Naive thymus-derived CD4-positive, alpha-beta T cell (primary cell): ENCODE measurements at regions of chr1 and their contacts with region 1.

Region 1: DNA sequence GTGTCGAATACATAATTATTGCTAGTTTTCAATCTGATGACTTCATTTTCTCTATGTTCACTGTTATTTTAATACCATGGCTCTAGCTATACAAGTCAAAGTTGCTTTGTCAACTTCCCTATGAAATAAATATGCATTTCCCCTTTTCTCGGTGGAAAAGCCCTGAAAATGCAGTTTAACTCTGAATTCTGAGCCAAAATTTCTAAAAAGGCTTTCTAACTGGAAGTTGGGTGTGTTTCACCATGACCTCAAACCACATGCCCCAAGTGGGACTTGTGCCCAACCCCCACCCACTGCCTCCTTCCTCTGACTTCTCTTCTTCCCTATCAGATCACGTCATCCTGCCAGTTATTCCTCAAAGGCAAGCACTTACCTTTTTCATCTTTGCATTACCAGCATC is 8.9 kb downstream of the MKNK1 start:
- DNase-seq: no peak
- ATAC-seq: peak; percentile 74
- H3K4me3 ChIP-seq: no peak overlapping the region
- H3K4me3 Mint-ChIP-seq: peak overlapping the region in 5 of 10 donors; percentile 3 to 55 (median 20)
- H3K27ac ChIP-seq: no peak overlapping the region
- H3K27ac Mint-ChIP-seq: peak overlapping the region in 6 of 9 donors; percentile 2 to 75 (median 33)
- H3K4me1 ChIP-seq: peaks cover 13 to 30% of the 10 kb centered on the region in 2 donors
- H3K4me1 Mint-ChIP-seq: peaks cover 33 to 83% (median 52%) of the 10 kb centered on the region in 7 donors
- H3K27me3 ChIP-seq: no peaks in the 10 kb centered on the region
- H3K27me3 Mint-ChIP-seq: no peaks in the 10 kb centered on the region

Region 2: GRCh38 chr1:46493316-46494032 is 101.7 kb before region 1 on chr1:
- CTCF ChIA-PET with region 1: no interaction called
- POLR2A ChIA-PET with region 1: no interaction called
- intact Hi-C with region 1: no loop called
- DNase-seq: no peak
- ATAC-seq: no peak
- H3K4me3 ChIP-seq: no peak overlapping the region
- H3K4me3 Mint-ChIP-seq: no peak overlapping the region
- H3K27ac ChIP-seq: no peak overlapping the region
- H3K27ac Mint-ChIP-seq: no peak overlapping the region
- H3K4me1 ChIP-seq: no peaks in the 10 kb centered on the region
- H3K4me1 Mint-ChIP-seq: peaks cover 0 to 19% (median 16%) of the 10 kb centered on the region in 7 donors
- H3K27me3 ChIP-seq: peaks cover 0 to 7% of the 10 kb centered on the region in 2 donors
- H3K27me3 Mint-ChIP-seq: peaks cover 66 to 87% (median 76%) of the 10 kb centered on the region in 5 donors

Region 3: GRCh38 chr1:46581681-46582455 is 13.3 kb before region 1 on chr1:
- CTCF ChIA-PET with region 1: no interaction called
- POLR2A ChIA-PET with region 1: no interaction called
- intact Hi-C with region 1: loop called in 1 of 2 experiments (anchors 2 kb)
- DNase-seq: peak in 1 of 9 donors; percentile 43
- ATAC-seq: peak; percentile 77
- H3K4me3 ChIP-seq: no peak overlapping the region
- H3K4me3 Mint-ChIP-seq: peak overlapping the region in 1 of 10 donors; percentile 83
- H3K27ac ChIP-seq: no peak overlapping the region
- H3K27ac Mint-ChIP-seq: peak overlapping the region in 4 of 9 donors; percentile 13 to 98 (median 59)
- H3K4me1 ChIP-seq: peaks cover 6 to 23% of the 10 kb centered on the region in 2 donors
- H3K4me1 Mint-ChIP-seq: peaks cover 5 to 55% (median 19%) of the 10 kb centered on the region in 7 donors
- H3K27me3 ChIP-seq: no peaks in the 10 kb centered on the region
- H3K27me3 Mint-ChIP-seq: no peaks in the 10 kb centered on the region

Region 4: GRCh38 chr1:46767649-46768282 is 172.6 kb after region 1 on chr1:
- CTCF ChIA-PET with region 1: no interaction called
- POLR2A ChIA-PET with region 1: no interaction called
- intact Hi-C with region 1: no loop called
- DNase-seq: no peak
- ATAC-seq: no peak
- H3K4me3 ChIP-seq: no peak overlapping the region
- H3K4me3 Mint-ChIP-seq: no peak overlapping the region
- H3K27ac ChIP-seq: no peak overlapping the region
- H3K27ac Mint-ChIP-seq: no peak overlapping the region
- H3K4me1 ChIP-seq: no peaks in the 10 kb centered on the region
- H3K4me1 Mint-ChIP-seq: peaks cover 0 to 3% (median 0%) of the 10 kb centered on the region in 7 donors
- H3K27me3 ChIP-seq: no peaks in the 10 kb centered on the region
- H3K27me3 Mint-ChIP-seq: peaks cover 5 to 60% (median 44%) of the 10 kb centered on the region in 5 donors

Region 5: DNA sequence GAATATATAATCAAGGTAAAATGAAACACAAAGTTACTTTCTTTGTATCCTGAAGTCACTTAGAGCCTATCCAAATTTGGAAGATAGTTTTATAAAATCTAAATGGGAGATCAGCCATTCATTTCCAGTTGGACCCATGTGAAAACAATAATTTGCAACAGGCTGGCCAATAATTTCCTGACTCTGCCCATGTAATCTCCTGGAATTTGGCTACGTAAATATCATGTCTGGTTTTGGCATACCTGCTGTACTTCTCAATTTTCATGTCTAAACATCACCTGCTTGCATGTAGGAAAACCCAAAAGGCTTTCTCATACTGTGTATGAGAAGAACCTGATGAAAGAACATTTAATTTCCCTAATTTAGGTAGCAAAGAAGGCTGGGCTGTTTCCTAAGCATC is 464.2 kb after region 1 on chr1:
- CTCF ChIA-PET with region 1: no interaction called
- POLR2A ChIA-PET with region 1: no interaction called
- intact Hi-C with region 1: no loop called
- DNase-seq: no peak
- ATAC-seq: no peak
- H3K4me3 ChIP-seq: no peak overlapping the region
- H3K4me3 Mint-ChIP-seq: no peak overlapping the region
- H3K27ac ChIP-seq: no peak overlapping the region
- H3K27ac Mint-ChIP-seq: no peak overlapping the region
- H3K4me1 ChIP-seq: no peaks in the 10 kb centered on the region
- H3K4me1 Mint-ChIP-seq: peaks cover 0 to 6% (median 0%) of the 10 kb centered on the region in 7 donors
- H3K27me3 ChIP-seq: no peaks in the 10 kb centered on the region
- H3K27me3 Mint-ChIP-seq: peaks cover 22 to 54% (median 41%) of the 10 kb centered on the region in 5 donors